Activated T-helper 1 cell treated with anti-CD3 and anti-CD28 coated beads, Interleukin-12 subunit alpha, Interleukin-12 subunit beta, Interleukin-2, Interleukin-4 antibody, amounts not matched to agents 30 ng/mL and 10 ng/mL and 1 ng/mL, durations not matched to agents 14 hours and 24 hours and 36 hours (primary cell): ENCODE measurements at regions of chr10 and their contacts with region 1.

Region 1: GRCh38 chr10:3935141-3935540 is 150.1 kb upstream of the KLF6 start:
- DNase-seq: peak; percentile 75
- H3K4me3 Mint-ChIP-seq: peak overlapping the region; percentile 56
- H3K27ac Mint-ChIP-seq: peak overlapping the region; percentile 86
- H3K4me1 Mint-ChIP-seq: peaks cover 67% of the 10 kb centered on the region
- H3K27me3 Mint-ChIP-seq: peaks cover 3% of the 10 kb centered on the region

Region 2: DNA sequence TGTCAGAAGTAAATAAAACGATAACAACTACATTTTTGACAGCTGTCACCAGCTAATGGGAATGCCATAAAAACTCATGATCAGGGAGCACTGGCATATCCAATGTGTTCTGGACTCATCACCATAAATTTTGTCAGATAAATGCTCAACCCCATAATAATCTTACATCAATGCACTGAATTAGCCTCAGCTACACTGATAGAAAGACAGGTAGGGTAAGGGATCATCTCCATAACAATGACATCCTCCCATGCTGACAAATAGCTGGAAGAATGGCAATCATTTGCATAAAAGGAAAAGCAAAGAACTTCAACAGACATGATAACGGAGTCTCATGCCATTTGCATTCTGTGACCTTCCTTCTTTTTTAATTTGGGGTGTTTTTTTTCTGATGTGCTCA is 1220.5 kb before region 1 on chr10:
- intact Hi-C with region 1: no loop called
- DNase-seq: no peak
- H3K4me3 Mint-ChIP-seq: no peak overlapping the region
- H3K27ac Mint-ChIP-seq: no peak overlapping the region
- H3K4me1 Mint-ChIP-seq: no peaks in the 10 kb centered on the region
- H3K27me3 Mint-ChIP-seq: no peaks in the 10 kb centered on the region

Region 3: GRCh38 chr10:3226960-3227744 is 708.0 kb before region 1 on chr10:
- intact Hi-C with region 1: loop called (anchors 5 kb)
- DNase-seq: no peak
- H3K4me3 Mint-ChIP-seq: no peak overlapping the region
- H3K27ac Mint-ChIP-seq: no peak overlapping the region
- H3K4me1 Mint-ChIP-seq: peaks cover 18% of the 10 kb centered on the region
- H3K27me3 Mint-ChIP-seq: peaks cover 18% of the 10 kb centered on the region

Region 4: GRCh38 chr10:3482200-3483138 is 452.7 kb before region 1 on chr10:
- intact Hi-C with region 1: no loop called
- DNase-seq: no peak
- H3K4me3 Mint-ChIP-seq: no peak overlapping the region
- H3K27ac Mint-ChIP-seq: no peak overlapping the region
- H3K4me1 Mint-ChIP-seq: peaks cover 31% of the 10 kb centered on the region
- H3K27me3 Mint-ChIP-seq: peaks cover 5% of the 10 kb centered on the region

Region 5: DNA sequence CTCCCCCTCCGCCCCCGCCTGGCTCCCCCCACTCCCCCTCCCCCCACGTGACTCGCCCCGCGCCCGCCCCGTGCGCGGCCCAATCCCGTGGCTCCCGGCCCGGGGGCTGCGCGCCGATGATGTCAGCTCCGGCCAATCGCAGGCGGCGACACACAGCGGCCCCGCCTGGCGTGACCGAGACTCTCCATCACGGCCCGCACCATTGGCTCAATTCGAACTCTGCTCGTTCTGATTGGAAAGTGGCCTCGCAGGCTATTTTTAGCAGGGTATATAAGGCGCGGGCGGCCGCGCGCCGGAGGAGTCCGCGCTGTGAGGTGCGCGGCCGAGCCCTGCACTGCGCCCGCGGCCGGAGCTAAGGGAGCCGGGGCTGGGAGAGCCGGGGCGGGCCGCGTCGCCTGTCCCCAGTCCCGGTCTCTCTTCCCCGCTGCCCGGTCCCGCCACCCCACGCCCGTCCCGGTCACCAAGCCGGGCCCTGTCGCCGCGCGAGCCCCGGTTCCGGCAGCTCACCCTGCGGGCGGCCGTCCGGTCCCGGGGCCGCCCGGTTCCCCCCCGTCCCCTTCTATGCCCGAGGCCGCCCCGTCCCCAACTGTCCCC is 149.8 kb before region 1 on chr10:
- intact Hi-C with region 1: loop called (anchors 1 kb)
- DNase-seq: peak; percentile 99
- H3K4me3 Mint-ChIP-seq: peak overlapping the region; percentile 93
- H3K27ac Mint-ChIP-seq: peak overlapping the region; percentile 96
- H3K4me1 Mint-ChIP-seq: peaks cover 49% of the 10 kb centered on the region
- H3K27me3 Mint-ChIP-seq: no peaks in the 10 kb centered on the region

Region 6: GRCh38 chr10:3852147-3852904 is 82.8 kb before region 1 on chr10:
- intact Hi-C with region 1: loop called (anchors 1 kb)
- DNase-seq: peak; percentile 58
- H3K4me3 Mint-ChIP-seq: peak overlapping the region; percentile 52
- H3K27ac Mint-ChIP-seq: peak overlapping the region; percentile 92
- H3K4me1 Mint-ChIP-seq: peaks cover 37% of the 10 kb centered on the region
- H3K27me3 Mint-ChIP-seq: no peaks in the 10 kb centered on the region

Region 7: GRCh38 chr10:3902054-3902808 is 32.9 kb before region 1 on chr10:
- intact Hi-C with region 1: loop called (anchors 1 kb)
- DNase-seq: peak; percentile 47
- H3K4me3 Mint-ChIP-seq: peak overlapping the region; percentile 22
- H3K27ac Mint-ChIP-seq: peak overlapping the region; percentile 93
- H3K4me1 Mint-ChIP-seq: peaks cover 38% of the 10 kb centered on the region
- H3K27me3 Mint-ChIP-seq: no peaks in the 10 kb centered on the region

Region 8: DNA sequence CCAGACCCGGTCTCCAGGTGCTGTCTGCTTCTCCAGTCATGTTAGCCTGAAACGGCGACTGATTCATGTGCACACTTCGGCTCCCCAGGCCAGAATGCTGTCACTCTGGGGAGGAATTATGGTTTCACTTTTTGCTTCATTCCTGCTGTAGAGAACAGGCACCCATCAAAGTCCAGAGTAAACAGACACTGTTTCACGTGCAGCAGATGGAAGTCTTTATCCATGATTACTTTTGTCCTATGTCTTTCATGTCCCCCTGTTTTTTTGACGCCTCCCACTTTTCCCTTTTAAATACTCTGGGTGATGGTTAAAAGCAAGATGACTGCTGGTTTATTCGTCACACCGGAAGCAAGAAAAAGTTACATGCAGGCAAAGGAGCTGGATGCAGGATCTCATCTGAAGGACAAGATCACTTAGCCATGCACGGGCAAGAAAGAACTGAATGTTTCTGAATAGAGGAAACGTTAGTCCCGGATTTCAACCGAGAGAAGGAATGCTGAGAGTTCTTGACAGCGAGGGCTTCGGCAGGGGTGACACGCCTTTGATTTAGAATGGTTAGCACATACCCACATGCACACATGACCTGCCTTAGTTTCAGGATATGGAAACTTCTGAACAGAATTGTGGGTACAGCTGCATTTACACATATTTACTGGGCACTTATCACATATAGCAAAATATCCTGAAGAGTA is 99.9 kb after region 1 on chr10:
- intact Hi-C with region 1: loop called (anchors 1 kb)
- DNase-seq: peak; percentile 11
- H3K4me3 Mint-ChIP-seq: peak overlapping the region; percentile 61
- H3K27ac Mint-ChIP-seq: peak overlapping the region; percentile 66
- H3K4me1 Mint-ChIP-seq: peaks cover 36% of the 10 kb centered on the region
- H3K27me3 Mint-ChIP-seq: no peaks in the 10 kb centered on the region